ENCODE measurements at regions of chr19 and their contacts with region 1.

Region 1: DNA sequence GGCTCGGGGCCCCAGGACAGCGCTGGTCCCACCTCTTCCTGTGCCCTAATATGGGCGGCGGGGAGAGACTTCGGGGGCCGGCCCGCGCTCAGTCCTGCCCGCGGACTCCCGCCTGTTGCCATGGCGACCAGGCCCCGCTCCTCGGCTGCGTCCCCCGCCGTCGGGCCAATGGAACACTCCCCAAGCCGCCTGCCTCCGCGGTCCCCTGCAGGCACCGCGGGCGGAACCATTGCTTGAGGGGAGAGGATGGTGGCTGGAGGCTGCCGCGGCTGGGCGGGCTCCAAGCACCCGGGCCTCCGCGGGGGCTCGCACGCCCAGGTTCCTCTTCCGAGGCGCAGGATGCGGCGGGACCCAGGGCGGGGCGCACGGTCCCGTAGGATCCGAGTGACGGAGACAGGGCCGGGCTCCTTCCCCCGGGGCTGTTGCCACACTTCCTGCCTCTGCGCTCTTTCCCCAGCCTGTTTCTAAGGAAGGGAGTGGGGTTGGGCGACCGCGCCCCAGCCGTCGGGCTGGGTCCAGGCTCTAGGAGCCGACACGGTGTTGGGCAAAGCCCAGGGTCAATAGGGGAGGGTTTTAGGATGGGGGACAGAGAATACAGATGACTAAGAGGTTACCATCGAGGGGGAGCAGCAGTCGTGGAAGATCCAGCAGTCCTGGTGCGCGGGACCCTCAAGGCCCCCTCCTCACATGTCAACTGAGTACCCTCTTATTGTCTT is 1.2 kb upstream of the JUNB start:
- DNase-seq: peak; percentile 92
- H3K4me3 ChIP-seq: peak overlapping the region; percentile 55 to 80
- H3K27ac ChIP-seq: peak overlapping the region; percentile 96 to 97
- H3K4me1 ChIP-seq: peaks cover 38 to 53% of the 10 kb centered on the region in 2 experiments
- H3K27me3 ChIP-seq: no peaks in the 10 kb centered on the region
- CTCF ChIP-seq: no peak
- EP300 ChIP-seq: no peak
- RAD21 ChIP-seq: no peak

Region 2: DNA sequence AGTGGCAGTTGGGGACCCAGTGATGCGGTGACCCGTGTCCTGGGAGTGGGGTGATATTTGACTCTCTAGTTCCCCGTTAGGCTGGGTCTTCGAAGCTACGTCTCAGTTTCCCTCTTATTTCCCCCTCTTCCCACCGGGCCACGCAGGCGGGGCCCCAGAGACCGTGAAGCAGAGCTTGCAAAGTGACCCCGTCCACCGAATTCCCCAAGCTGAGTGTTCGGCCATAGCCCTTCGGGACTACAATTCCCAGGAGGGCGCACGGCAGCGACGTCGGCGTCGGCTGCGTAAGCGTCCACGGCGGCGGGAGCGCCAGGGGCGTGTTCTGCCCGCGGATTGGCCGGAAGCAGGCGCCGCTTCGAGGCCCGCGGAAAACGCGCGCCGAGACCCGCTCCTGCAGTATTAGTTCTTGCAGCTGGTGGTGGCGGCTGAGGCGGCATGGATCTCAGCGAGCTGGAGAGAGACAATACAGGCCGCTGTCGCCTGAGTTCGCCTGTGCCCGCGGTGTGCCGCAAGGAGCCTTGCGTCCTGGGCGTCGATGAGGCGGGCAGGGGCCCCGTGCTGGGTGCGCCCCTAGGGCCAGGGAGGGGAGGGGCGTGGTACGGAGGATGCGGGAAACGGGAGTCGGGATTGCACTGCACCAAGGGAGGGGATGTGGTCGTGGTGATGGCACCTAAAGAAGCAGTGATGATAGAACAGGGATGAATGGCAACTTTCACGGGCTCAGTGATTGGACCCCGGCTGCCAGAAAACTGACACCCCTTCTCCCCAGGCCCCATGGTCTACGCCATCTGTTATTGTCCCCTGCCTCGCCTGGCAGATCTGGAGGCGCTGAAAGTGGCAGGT is 16.4 kb after region 1 on chr19 and contains the start of gene RNASEH2A:
- CTCF ChIA-PET with region 1: interaction called, 10 read pairs
- POLR2A ChIA-PET with region 1: interaction called, 20 read pairs
- DNase-seq: peak; percentile 95
- H3K4me3 ChIP-seq: peak within 1 kb of the TSS; percentile 68 to 75
- H3K27ac ChIP-seq: peak within 1 kb of the TSS in 1 of 2 experiments; percentile 64; a peak in 2 of 4 replicates
- H3K4me1 ChIP-seq: peaks cover 4 to 18% of the 10 kb centered on the region in 2 experiments; a peak in 1 of 4 replicates
- H3K27me3 ChIP-seq: no peaks in the 10 kb centered on the region
- CTCF ChIP-seq: no peak; the same call in 1 of the 2 replicates
- EP300 ChIP-seq: no peak; a peak in 1 of 4 replicates
- RAD21 ChIP-seq: no peak
- polyA plus RNA-seq, gene RNASEH2A: 35.2 and 48.1 TPM in 2 replicates

Region 3: GRCh38 chr19:12881172-12881808 is 91.2 kb after region 1 on chr19 and contains the start of gene DNASE2:
- CTCF ChIA-PET with region 1: no interaction called
- POLR2A ChIA-PET with region 1: no interaction called
- DNase-seq: peak; percentile 95
- H3K4me3 ChIP-seq: peak within 1 kb of the TSS; percentile 68 to 86
- H3K27ac ChIP-seq: peak within 1 kb of the TSS; percentile 71 to 76
- H3K4me1 ChIP-seq: peaks cover 0 to 9% of the 10 kb centered on the region in 2 experiments; a peak in 1 of 4 replicates
- H3K27me3 ChIP-seq: peaks cover 11% of the 10 kb centered on the region; the same call in 1 of the 2 replicates
- CTCF ChIP-seq: no peak
- EP300 ChIP-seq: no peak
- RAD21 ChIP-seq: no peak
- polyA plus RNA-seq, gene DNASE2: 29.8 and 40.7 TPM in 2 replicates